WTC11 (cell line): ENCODE measurements at regions of chr4 and their contacts with region 1.

Region 1: DNA sequence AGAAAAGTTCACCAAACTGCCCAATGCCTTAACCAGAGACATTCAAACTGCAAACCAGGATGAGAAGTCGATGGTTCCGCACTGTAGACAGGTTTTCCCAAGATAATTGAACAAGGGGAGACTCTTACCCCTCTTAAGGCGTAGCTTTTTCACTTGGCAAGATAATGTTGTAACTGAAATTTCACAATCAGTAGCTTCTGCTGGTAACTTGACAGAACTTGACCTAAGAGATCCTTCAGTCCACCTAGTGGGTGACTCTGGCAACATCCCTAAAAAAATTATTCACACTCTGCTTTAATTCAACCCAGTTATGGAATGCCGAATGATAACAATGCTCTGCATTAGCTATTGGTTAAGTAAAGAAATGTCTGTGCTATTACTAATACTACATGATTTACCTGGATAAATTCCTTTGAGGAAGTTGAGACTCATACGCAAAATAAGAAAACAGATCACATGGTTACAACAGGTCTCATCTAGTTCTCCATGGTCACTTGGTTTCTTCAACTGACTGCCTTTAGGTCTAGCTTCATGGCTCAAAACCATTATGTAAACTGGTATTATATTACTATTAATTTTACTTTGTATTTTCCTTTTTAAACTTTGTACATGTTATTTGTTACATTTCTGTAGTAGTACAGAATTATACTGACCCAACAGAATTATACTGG is 9.1 kb downstream of the ELF2 start:
- DNase-seq: no peak
- ATAC-seq: peak; percentile 56
- H3K4me3 Mint-ChIP-seq: no peak overlapping the region
- H3K27ac Mint-ChIP-seq: peak overlapping the region; percentile 96
- H3K4me1 Mint-ChIP-seq: peaks cover 75% of the 10 kb centered on the region
- H3K27me3 Mint-ChIP-seq: no peaks in the 10 kb centered on the region
- CTCF ChIP-seq: no peak

Region 2: DNA sequence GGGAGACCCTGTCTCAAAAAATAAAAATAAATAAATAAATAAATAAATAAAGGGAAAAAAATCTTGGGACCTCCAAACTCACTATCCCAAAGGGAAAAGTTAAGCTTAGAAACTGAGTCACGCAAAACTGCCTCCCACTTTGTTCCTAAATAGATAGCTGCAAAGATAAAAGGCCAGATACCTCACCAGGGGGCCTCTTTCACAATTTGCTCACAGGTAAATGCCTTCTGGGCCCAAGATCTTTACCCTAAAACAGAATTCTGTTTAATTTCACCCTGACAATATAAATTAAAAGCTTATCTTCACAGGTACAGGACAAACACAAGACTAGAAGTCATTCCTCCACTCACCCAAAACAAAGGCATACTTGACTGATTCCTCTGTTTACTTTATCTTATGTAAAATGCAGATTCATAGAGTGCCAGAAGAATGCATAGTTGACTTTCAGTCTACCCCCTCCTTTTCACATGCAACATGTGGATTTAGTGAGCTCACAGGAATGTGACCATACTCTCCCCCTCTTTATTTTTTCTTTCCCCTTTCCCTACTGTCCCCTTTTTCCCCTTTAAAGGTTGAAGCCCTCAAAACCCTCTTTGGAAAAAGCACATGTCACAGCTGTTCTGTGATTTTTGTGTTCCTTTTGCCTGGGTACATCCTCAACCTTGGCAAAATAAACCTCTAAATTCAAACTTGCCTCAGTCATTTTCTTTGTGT is 14.3 kb before region 1 on chr4:
- CTCF ChIA-PET with region 1: interaction called, 17 read pairs
- POLR2A ChIA-PET with region 1: interaction called, 3 read pairs
- DNase-seq: no peak
- ATAC-seq: peak; percentile 62
- H3K4me3 Mint-ChIP-seq: peak overlapping the region; percentile 22
- H3K27ac Mint-ChIP-seq: peak overlapping the region; percentile 97
- H3K4me1 Mint-ChIP-seq: peaks cover 68% of the 10 kb centered on the region
- H3K27me3 Mint-ChIP-seq: no peaks in the 10 kb centered on the region
- CTCF ChIP-seq: no peak

Region 3: GRCh38 chr4:139266583-139267257 is 98.8 kb after region 1 on chr4:
- CTCF ChIA-PET with region 1: no interaction called
- POLR2A ChIA-PET with region 1: no interaction called
- DNase-seq: no peak
- ATAC-seq: peak; percentile 72
- H3K4me3 Mint-ChIP-seq: no peak overlapping the region
- H3K27ac Mint-ChIP-seq: no peak overlapping the region
- H3K4me1 Mint-ChIP-seq: peaks cover 20% of the 10 kb centered on the region
- H3K27me3 Mint-ChIP-seq: no peaks in the 10 kb centered on the region
- CTCF ChIP-seq: no peak